Activated CD4-positive, alpha-beta memory T cell treated with anti-CD3 and anti-CD28 coated beads for 36 hours (primary cell): ENCODE measurements at regions of chr20 and their contacts with region 1.

Region 1: DNA sequence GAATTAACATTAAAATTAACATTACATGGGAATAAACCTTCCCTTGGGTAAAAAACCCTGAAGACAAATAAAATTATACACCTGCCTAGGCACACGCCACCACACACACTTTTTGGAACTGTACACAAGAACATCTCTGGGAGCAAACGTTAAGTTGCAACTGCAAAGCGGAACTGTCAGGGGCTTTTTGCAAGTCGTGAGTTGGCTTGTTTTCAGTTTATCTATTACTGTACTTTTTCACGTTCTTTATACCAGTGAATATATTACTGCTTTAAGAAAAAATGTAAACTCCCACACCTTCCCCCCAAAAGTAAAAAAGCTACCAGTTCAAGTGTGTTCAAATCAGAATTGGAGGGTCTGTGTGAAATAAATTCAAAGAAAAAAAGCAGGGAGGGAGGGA is 65.5 kb upstream of the NFATC2 start:
- DNase-seq: peak; percentile 61
- H3K4me3 Mint-ChIP-seq: peak overlapping the region; percentile 65
- H3K27ac Mint-ChIP-seq: peak overlapping the region; percentile 88
- H3K4me1 Mint-ChIP-seq: peaks cover 48% of the 10 kb centered on the region
- H3K27me3 Mint-ChIP-seq: peaks cover 23% of the 10 kb centered on the region

Region 2: GRCh38 chr20:51573576-51574243 is 34.4 kb before region 1 on chr20:
- CTCF ChIA-PET with region 1: no interaction called
- POLR2A ChIA-PET with region 1: no interaction called
- intact Hi-C with region 1: loop called (anchors 1 kb)
- DNase-seq: no peak
- H3K4me3 Mint-ChIP-seq: no peak overlapping the region
- H3K27ac Mint-ChIP-seq: peak overlapping the region; percentile 40
- H3K4me1 Mint-ChIP-seq: peaks cover 20% of the 10 kb centered on the region
- H3K27me3 Mint-ChIP-seq: peaks cover 8% of the 10 kb centered on the region

Region 3: GRCh38 chr20:51631011-51631950 is 23.2 kb after region 1 on chr20:
- CTCF ChIA-PET with region 1: interaction called, 7 read pairs
- POLR2A ChIA-PET with region 1: no interaction called
- intact Hi-C with region 1: loop called (anchors 2 kb)
- DNase-seq: peak; percentile 68
- H3K4me3 Mint-ChIP-seq: peak overlapping the region; percentile 38
- H3K27ac Mint-ChIP-seq: peak overlapping the region; percentile 82
- H3K4me1 Mint-ChIP-seq: peaks cover 79% of the 10 kb centered on the region
- H3K27me3 Mint-ChIP-seq: peaks cover 21% of the 10 kb centered on the region